ENCODE measurements at regions of chr4 and their contacts with region 1.

Region 1: DNA sequence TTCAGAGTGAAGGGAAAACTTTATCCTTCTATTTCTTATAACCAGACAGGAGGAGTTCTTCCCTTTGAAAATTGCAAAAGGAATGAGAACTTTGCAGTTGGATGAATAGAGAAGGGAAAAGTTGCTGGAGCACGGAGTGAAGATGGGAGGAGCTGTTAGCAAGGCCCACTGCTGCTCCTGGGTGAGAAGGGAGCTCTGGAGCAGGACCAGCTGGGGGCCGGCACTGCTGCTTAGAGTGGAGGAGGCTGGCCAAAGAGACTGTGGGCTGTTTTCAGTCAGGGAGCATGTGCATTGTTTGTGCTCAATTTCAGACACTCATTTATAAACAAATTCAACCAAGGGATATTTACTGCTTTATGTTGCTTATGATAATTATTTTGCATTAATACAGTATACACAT is 164.2 kb downstream of the STIM2 start:
- DNase-seq: no peak
- ATAC-seq: no peak
- H3K4me3 Mint-ChIP-seq: no peak overlapping the region
- H3K27ac Mint-ChIP-seq: no peak overlapping the region
- H3K4me1 Mint-ChIP-seq: peaks cover 2% of the 10 kb centered on the region
- H3K27me3 Mint-ChIP-seq: no peaks in the 10 kb centered on the region

Region 2: DNA sequence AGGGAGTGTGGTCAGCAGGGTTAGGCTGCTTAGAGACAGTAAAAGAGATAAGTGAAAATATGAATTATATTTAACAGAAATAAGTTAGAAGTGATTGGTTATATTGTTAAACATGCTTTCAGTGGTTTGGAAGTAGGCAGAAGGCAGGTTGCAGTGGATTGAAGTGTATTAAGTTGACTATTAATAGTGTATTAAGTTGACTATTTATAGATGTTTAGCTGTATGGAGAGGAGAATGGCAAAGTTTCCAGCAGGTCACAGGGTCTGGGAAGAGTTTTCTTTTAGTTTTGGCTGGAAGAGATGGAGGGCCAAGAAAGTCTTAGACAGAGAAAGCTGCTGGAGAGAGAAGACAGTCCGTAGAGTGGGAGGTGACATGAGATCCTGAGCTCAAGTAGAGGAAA is 1102.9 kb before region 1 on chr4:
- POLR2A ChIA-PET with region 1: interaction called, 10 read pairs
- DNase-seq: no peak
- ATAC-seq: no peak
- H3K4me3 Mint-ChIP-seq: no peak overlapping the region
- H3K27ac Mint-ChIP-seq: no peak overlapping the region
- H3K4me1 Mint-ChIP-seq: peaks cover 5% of the 10 kb centered on the region
- H3K27me3 Mint-ChIP-seq: no peaks in the 10 kb centered on the region

Region 3: GRCh38 chr4:27081675-27082586 is 57.1 kb after region 1 on chr4:
- POLR2A ChIA-PET with region 1: no interaction called
- DNase-seq: no peak
- ATAC-seq: no peak
- H3K4me3 Mint-ChIP-seq: no peak overlapping the region
- H3K27ac Mint-ChIP-seq: no peak overlapping the region
- H3K4me1 Mint-ChIP-seq: peaks cover 5% of the 10 kb centered on the region
- H3K27me3 Mint-ChIP-seq: peaks cover 38% of the 10 kb centered on the region

Measured in activated naive CD8-positive, alpha-beta T cell treated with anti-CD3 and anti-CD28 coated beads, Interleukin-2, amount 10 ng/mL, durations not matched to agents 7 days and 5 days (primary cell).